Caco-2 (cell line): ENCODE measurements at regions of chr11 and their contacts with region 1.

Region 1: DNA sequence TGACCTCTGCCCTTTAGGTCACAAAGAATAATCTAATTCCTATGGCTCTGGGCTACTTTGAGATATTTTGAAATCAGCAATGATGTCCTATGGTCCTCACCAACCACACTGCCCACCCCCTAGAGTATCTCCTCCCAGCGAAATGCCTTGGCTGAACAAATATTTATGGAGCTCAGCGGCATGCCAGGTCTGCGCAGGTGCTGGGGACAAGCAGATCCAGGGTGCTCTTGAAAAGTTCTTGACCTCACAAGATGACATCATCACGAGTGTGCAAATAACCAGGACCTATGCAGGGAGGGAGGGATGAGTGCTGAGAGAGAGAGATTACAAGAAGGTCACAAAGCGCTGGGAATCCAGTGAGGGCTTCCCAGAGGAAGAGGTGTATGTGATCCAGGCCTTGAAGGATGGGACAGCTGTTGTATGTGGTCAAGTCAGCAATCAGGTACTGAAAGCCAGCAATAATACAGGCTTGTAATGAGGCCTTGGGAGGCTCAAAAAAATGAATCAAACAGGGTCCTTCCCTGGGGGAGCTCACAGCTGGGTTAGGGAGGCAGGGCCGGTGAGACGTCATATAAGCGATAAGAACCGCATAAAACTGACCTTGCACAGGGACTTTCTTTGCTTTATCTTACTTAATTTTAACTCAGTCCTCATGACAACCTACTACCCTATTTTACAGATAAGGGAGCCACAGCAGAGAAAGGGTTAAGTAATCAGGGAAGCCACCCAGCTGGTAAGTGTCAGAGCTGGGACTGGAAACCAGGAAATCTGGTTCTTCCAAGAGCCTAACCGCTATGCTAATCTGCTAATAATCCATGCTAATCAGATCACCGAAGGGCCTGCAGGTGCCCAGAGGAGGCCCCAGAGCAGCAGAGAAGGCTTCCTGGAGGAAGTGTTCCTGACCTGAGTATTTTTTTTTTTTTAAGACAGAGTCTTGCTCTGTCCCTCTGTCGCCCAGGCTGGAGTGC is 8.3 kb downstream of the ARRB1 start:
- DNase-seq: peak; percentile 95
- H3K4me3 ChIP-seq: no peak overlapping the region
- H3K4me3 Mint-ChIP-seq: peak overlapping the region; percentile 51
- H3K27ac Mint-ChIP-seq: peak overlapping the region; percentile 75
- H3K4me1 ChIP-seq: peaks cover 78% of the 10 kb centered on the region
- H3K4me1 Mint-ChIP-seq: peaks cover 65% of the 10 kb centered on the region
- H3K27me3 ChIP-seq: no peaks in the 10 kb centered on the region
- H3K27me3 Mint-ChIP-seq: no peaks in the 10 kb centered on the region
- CTCF ChIP-seq: no peak

Region 2: GRCh38 chr11:75263944-75264349 is 79.2 kb before region 1 on chr11:
- CTCF ChIA-PET with region 1: no interaction called
- POLR2A ChIA-PET with region 1: no interaction called
- intact Hi-C with region 1: no loop called
- DNase-seq: peak in 1 of 2 experiments; percentile 38
- H3K4me3 ChIP-seq: no peak overlapping the region
- H3K4me3 Mint-ChIP-seq: no peak overlapping the region
- H3K27ac Mint-ChIP-seq: peak overlapping the region; percentile 29
- H3K4me1 ChIP-seq: no peaks in the 10 kb centered on the region
- H3K4me1 Mint-ChIP-seq: peaks cover 9% of the 10 kb centered on the region
- H3K27me3 ChIP-seq: no peaks in the 10 kb centered on the region; the same call in 1 of the 2 replicates
- H3K27me3 Mint-ChIP-seq: peaks cover 4% of the 10 kb centered on the region
- CTCF ChIP-seq: no peak

Region 3: DNA sequence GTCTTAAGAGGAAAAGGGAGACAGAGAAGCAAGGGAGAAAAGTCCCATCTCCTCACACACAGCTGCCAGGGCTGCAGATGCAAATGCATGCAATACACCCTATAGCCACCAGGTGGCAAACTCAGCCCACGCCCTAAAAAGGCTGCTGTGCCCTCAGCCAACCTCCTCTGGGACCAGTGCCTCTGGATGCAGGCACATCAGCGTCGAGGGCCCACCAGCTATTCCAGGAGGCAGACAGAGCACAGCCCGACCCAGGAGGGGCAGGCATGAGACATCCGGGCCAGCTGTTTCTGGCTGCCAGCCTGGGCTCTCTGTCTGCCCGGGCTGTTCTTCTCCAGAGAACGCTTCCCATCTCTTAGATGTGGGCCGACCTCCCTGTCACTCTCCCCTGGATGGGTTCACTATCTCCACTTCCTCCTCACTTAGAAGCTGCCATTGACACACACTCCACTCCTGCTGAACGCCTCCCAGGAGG is 62.9 kb before region 1 on chr11:
- CTCF ChIA-PET with region 1: interaction called, 14 read pairs
- POLR2A ChIA-PET with region 1: no interaction called
- intact Hi-C with region 1: no loop called
- DNase-seq: peak; percentile 86 to 92
- H3K4me3 ChIP-seq: no peak overlapping the region
- H3K4me3 Mint-ChIP-seq: no peak overlapping the region
- H3K27ac Mint-ChIP-seq: peak overlapping the region; percentile 88
- H3K4me1 ChIP-seq: peaks cover 34% of the 10 kb centered on the region
- H3K4me1 Mint-ChIP-seq: peaks cover 32% of the 10 kb centered on the region
- H3K27me3 ChIP-seq: no peaks in the 10 kb centered on the region
- H3K27me3 Mint-ChIP-seq: no peaks in the 10 kb centered on the region
- CTCF ChIP-seq: peak; percentile 99

Region 4: GRCh38 chr11:75328426-75329277 is 14.5 kb before region 1 on chr11:
- CTCF ChIA-PET with region 1: interaction called, 14 read pairs
- POLR2A ChIA-PET with region 1: interaction called, 10 read pairs
- intact Hi-C with region 1: loop called (anchors 1 kb)
- DNase-seq: peak; percentile 91 to 92
- H3K4me3 ChIP-seq: no peak overlapping the region
- H3K4me3 Mint-ChIP-seq: no peak overlapping the region
- H3K27ac Mint-ChIP-seq: peak overlapping the region; percentile 8
- H3K4me1 ChIP-seq: peaks cover 41% of the 10 kb centered on the region
- H3K4me1 Mint-ChIP-seq: peaks cover 64% of the 10 kb centered on the region
- H3K27me3 ChIP-seq: no peaks in the 10 kb centered on the region
- H3K27me3 Mint-ChIP-seq: no peaks in the 10 kb centered on the region
- CTCF ChIP-seq: peak; percentile 90 to 98

Region 5: GRCh38 chr11:75371941-75372789 is 29.0 kb after region 1 on chr11:
- CTCF ChIA-PET with region 1: interaction called, 10 read pairs
- POLR2A ChIA-PET with region 1: interaction called, 10 read pairs
- intact Hi-C with region 1: loop called (anchors 1 kb)
- DNase-seq: peak; percentile 74 to 78
- H3K4me3 ChIP-seq: no peak overlapping the region
- H3K4me3 Mint-ChIP-seq: peak overlapping the region; percentile 53
- H3K27ac Mint-ChIP-seq: peak overlapping the region; percentile 79
- H3K4me1 ChIP-seq: peaks cover 69% of the 10 kb centered on the region
- H3K4me1 Mint-ChIP-seq: peaks cover 58% of the 10 kb centered on the region
- H3K27me3 ChIP-seq: no peaks in the 10 kb centered on the region
- H3K27me3 Mint-ChIP-seq: no peaks in the 10 kb centered on the region
- CTCF ChIP-seq: no peak

Region 6: DNA sequence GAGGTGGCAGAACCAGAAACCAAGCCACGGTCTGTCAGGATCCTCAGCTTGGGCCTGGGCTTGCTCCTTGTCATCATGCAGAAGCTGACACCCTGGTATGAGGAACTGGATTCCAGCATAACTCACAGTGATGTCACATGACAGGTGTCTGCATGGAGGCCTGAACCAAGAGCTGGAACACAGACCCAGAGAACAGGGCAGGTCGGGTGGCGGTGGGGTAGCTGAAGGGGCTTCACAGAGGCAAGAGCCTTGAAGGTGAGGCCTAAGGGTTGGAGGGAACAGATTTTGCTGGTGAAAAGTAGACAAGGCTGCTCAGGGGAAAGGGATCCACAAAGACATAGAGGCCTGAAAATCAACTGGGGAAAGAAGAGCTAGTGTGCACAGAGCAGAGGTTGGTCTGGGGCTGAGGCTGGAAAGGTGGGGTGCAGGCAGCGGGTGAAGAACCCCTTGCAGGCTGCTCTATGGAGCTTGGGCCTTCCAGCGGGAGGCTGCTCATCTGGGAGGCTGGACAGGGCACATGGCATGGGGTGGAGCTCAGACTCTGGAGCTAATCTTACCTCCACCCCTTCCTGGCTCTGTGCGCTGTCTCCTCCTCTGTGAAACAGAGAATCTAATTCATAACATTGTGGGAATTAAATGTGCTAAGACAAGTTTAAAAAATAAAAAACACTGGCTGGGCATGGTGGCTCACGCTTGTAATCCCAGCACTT is 37.7 kb after region 1 on chr11:
- CTCF ChIA-PET with region 1: interaction called, 22 read pairs
- POLR2A ChIA-PET with region 1: interaction called, 21 read pairs
- intact Hi-C with region 1: loop called (anchors 1 kb)
- DNase-seq: peak; percentile 85 to 90
- H3K4me3 ChIP-seq: no peak overlapping the region
- H3K4me3 Mint-ChIP-seq: peak overlapping the region; percentile 66
- H3K27ac Mint-ChIP-seq: peak overlapping the region; percentile 97
- H3K4me1 ChIP-seq: peaks cover 57% of the 10 kb centered on the region
- H3K4me1 Mint-ChIP-seq: peaks cover 39% of the 10 kb centered on the region
- H3K27me3 ChIP-seq: no peaks in the 10 kb centered on the region
- H3K27me3 Mint-ChIP-seq: no peaks in the 10 kb centered on the region
- CTCF ChIP-seq: no peak

Region 7: GRCh38 chr11:75422253-75423231 is 79.4 kb after region 1 on chr11:
- CTCF ChIA-PET with region 1: no interaction called
- POLR2A ChIA-PET with region 1: interaction called, 5 read pairs
- intact Hi-C with region 1: loop called (anchors 5 kb)
- DNase-seq: peak; percentile 97 to 98
- H3K4me3 ChIP-seq: no peak overlapping the region
- H3K4me3 Mint-ChIP-seq: peak overlapping the region; percentile 66
- H3K27ac Mint-ChIP-seq: peak overlapping the region; percentile 92
- H3K4me1 ChIP-seq: peaks cover 56% of the 10 kb centered on the region
- H3K4me1 Mint-ChIP-seq: peaks cover 54% of the 10 kb centered on the region
- H3K27me3 ChIP-seq: no peaks in the 10 kb centered on the region
- H3K27me3 Mint-ChIP-seq: no peaks in the 10 kb centered on the region
- CTCF ChIP-seq: no peak